Activated CD4-positive, alpha-beta T cell treated with anti-CD3 and anti-CD28 coated beads for 36 hours (primary cell): ENCODE measurements at regions of chr13 and their contacts with region 1.

Region 1: GRCh38 chr13:102555917-102556553 is 40.8 kb upstream of the TPP2 start:
- DNase-seq: peak; percentile 9
- ATAC-seq: peak; percentile 73
- H3K4me3 Mint-ChIP-seq: no peak overlapping the region
- H3K27ac Mint-ChIP-seq: no peak overlapping the region
- H3K4me1 Mint-ChIP-seq: no peaks in the 10 kb centered on the region
- H3K27me3 Mint-ChIP-seq: no peaks in the 10 kb centered on the region

Region 2: DNA sequence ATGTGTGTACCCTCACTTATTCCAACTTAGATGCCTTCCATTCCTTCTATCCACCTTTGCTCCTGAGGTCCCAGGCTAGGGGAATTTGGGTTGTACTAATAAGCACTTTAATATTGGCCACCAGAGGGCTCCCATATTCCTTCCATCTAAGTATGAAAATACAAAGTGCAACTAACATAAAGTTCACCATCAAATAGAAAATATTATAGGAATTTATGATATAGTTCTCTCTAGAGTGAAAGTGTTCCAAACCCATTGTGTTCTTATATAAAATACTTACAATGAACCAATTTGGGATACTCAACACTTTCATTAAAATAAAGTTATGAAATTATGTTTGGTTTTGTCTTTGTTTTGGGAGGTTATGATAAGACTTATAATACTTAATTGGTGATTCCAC is 1041.2 kb before region 1 on chr13:
- CTCF ChIA-PET with region 1: interaction called, 3 read pairs
- POLR2A ChIA-PET with region 1: no interaction called
- intact Hi-C with region 1: loop called in 1 of 2 experiments (anchors 2 kb)
- DNase-seq: peak; percentile 19
- ATAC-seq: no peak
- H3K4me3 Mint-ChIP-seq: no peak overlapping the region
- H3K27ac Mint-ChIP-seq: no peak overlapping the region
- H3K4me1 Mint-ChIP-seq: no peaks in the 10 kb centered on the region
- H3K27me3 Mint-ChIP-seq: peaks cover 3% of the 10 kb centered on the region

Region 3: DNA sequence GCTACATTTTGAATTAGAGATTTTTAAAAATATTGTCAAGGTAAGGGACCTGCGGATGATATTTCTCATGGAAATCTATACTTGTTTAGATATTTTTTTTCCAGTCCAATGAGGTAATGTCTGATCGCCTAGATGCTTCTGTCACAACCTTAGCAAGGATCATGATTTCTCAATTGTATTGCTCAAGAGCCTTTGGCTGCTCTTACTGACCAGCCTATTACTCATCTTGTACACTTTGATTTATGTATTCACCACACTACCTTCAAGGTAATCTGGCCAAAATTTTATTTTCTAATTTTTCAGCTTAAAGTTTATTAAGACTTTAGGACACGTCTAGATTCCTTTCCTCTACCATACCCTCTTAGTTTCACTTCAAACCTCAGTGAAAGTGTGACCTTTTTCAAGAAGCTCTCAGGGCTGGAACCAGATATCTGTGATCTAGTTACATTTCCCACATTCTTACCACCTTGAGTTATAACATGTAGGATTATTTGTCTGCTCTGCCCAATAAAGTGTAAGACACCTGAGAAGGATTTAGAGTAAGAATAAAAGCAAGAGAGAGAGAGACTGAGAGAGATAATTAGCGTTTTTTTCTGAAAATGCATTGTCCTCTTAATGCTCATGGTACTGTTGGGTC is 906.4 kb before region 1 on chr13:
- CTCF ChIA-PET with region 1: no interaction called
- POLR2A ChIA-PET with region 1: no interaction called
- intact Hi-C with region 1: no loop called
- DNase-seq: no peak
- ATAC-seq: no peak
- H3K4me3 Mint-ChIP-seq: no peak overlapping the region
- H3K27ac Mint-ChIP-seq: no peak overlapping the region
- H3K4me1 Mint-ChIP-seq: no peaks in the 10 kb centered on the region
- H3K27me3 Mint-ChIP-seq: peaks cover 20% of the 10 kb centered on the region

Region 4: DNA sequence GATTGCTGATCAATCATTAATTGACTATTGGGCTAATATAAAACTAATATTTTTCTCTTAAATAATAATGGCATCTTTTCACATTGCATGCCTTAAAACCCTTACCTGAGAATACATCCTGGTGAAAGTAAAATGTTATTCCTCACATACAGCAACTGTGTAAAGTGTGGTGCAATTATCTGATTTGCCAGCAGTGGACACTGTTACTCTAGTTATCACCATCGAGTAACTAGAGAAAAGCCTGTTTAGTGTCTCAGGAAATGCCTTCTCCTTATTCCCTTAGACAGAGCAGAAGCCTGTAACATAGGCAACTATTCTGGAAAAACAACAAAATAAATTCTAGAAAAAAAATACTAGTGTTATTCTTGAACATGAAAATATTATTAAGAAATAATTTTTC is 614.0 kb before region 1 on chr13:
- CTCF ChIA-PET with region 1: interaction called, 6 read pairs
- POLR2A ChIA-PET with region 1: no interaction called
- intact Hi-C with region 1: loop called (anchors 5 kb)
- DNase-seq: no peak
- ATAC-seq: no peak
- H3K4me3 Mint-ChIP-seq: no peak overlapping the region
- H3K27ac Mint-ChIP-seq: no peak overlapping the region
- H3K4me1 Mint-ChIP-seq: no peaks in the 10 kb centered on the region
- H3K27me3 Mint-ChIP-seq: peaks cover 9% of the 10 kb centered on the region

Region 5: GRCh38 chr13:102020611-102021216 is 535.3 kb before region 1 on chr13:
- CTCF ChIA-PET with region 1: no interaction called
- POLR2A ChIA-PET with region 1: no interaction called
- intact Hi-C with region 1: no loop called
- DNase-seq: no peak
- ATAC-seq: no peak
- H3K4me3 Mint-ChIP-seq: no peak overlapping the region
- H3K27ac Mint-ChIP-seq: no peak overlapping the region
- H3K4me1 Mint-ChIP-seq: no peaks in the 10 kb centered on the region
- H3K27me3 Mint-ChIP-seq: peaks cover 4% of the 10 kb centered on the region

Region 6: GRCh38 chr13:102141625-102142472 is 414.2 kb before region 1 on chr13:
- CTCF ChIA-PET with region 1: interaction called, 5 read pairs
- POLR2A ChIA-PET with region 1: no interaction called
- intact Hi-C with region 1: loop called (anchors 2 to 5 kb)
- DNase-seq: no peak
- ATAC-seq: no peak
- H3K4me3 Mint-ChIP-seq: no peak overlapping the region
- H3K27ac Mint-ChIP-seq: no peak overlapping the region
- H3K4me1 Mint-ChIP-seq: no peaks in the 10 kb centered on the region
- H3K27me3 Mint-ChIP-seq: no peaks in the 10 kb centered on the region

Region 7: GRCh38 chr13:102460801-102461200 is 95.2 kb before region 1 on chr13:
- CTCF ChIA-PET with region 1: interaction called, 3 read pairs
- POLR2A ChIA-PET with region 1: no interaction called
- intact Hi-C with region 1: loop called in 1 of 2 experiments (anchors 5 kb)
- DNase-seq: no peak
- ATAC-seq: no peak
- H3K4me3 Mint-ChIP-seq: no peak overlapping the region
- H3K27ac Mint-ChIP-seq: no peak overlapping the region
- H3K4me1 Mint-ChIP-seq: peaks cover 6% of the 10 kb centered on the region
- H3K27me3 Mint-ChIP-seq: peaks cover 15% of the 10 kb centered on the region

Region 8: DNA sequence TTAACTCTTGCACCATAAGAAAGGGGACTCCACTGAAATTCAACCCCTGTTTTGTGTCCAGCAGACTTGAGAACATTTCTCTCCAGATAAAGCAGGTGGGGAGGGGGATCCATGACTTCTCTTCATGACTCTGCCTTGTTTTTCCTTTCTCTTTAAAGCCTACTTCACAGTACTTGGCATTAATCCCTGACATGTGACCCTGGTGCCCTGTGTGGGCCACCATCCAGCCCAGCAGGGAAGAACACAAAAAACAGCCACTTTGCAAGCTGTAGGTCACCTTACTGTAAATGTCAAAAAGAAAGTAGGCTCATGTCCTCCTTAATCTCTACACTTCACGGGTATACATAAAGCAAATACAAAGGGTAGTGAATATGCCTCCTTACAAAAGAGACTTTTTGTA is 10.5 kb after region 1 on chr13:
- CTCF ChIA-PET with region 1: interaction called, 16 read pairs
- POLR2A ChIA-PET with region 1: interaction called, 4 read pairs
- intact Hi-C with region 1: no loop called
- DNase-seq: no peak
- ATAC-seq: no peak
- H3K4me3 Mint-ChIP-seq: no peak overlapping the region
- H3K27ac Mint-ChIP-seq: no peak overlapping the region
- H3K4me1 Mint-ChIP-seq: no peaks in the 10 kb centered on the region
- H3K27me3 Mint-ChIP-seq: peaks cover 19% of the 10 kb centered on the region